Activated CD8-positive, alpha-beta T cell treated with anti-CD3 and anti-CD28 coated beads for 36 hours (primary cell): ENCODE measurements at regions of chrX and their contacts with region 1.

Region 1: GRCh38 chrX:38985375-38985774 is 184.1 kb downstream of the MID1IP1 start:
- DNase-seq: peak; percentile 11
- ATAC-seq: peak; percentile 75
- H3K4me3 Mint-ChIP-seq: no peak overlapping the region
- H3K27ac Mint-ChIP-seq: no peak overlapping the region
- H3K4me1 Mint-ChIP-seq: no peaks in the 10 kb centered on the region
- H3K27me3 Mint-ChIP-seq: no peaks in the 10 kb centered on the region
- CTCF ChIP-seq: peak; percentile 40

Region 2: DNA sequence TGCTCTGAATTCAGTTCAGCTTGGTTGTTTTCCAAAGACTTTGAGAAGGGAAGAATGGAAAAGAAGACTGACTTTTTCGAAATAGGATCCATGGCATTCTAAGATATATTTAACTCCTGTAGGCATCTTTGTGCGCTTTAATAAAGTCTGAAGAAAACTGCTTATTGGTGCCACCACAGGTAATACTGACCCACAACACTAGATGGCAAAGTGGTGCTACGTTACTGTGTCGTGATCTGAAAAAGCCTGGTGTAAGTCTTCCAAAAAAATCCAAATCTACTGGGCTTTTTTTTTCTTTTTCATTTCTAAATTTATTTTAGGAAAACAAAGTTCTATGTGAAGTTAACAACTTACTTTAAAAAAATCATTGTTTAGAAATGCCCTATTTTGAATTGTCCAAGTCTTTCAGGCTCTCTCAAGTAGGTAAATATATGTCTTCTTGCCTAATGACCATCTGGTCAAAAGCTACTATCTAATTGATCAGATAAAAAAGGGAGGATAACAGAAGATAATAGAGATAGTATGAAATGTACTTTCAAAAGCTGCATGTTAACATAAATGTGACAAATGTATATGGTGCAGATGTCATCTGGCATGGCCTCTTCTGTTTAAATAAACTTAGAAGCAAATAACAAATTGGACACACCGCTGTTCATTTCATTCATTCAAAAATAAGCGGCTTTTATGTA is 231.1 kb before region 1 on chrX:
- CTCF ChIA-PET with region 1: interaction called, 7 read pairs
- POLR2A ChIA-PET with region 1: no interaction called
- intact Hi-C with region 1: loop called (anchors 5 kb)
- DNase-seq: peak; percentile 41
- ATAC-seq: no peak
- H3K4me3 Mint-ChIP-seq: no peak overlapping the region
- H3K27ac Mint-ChIP-seq: no peak overlapping the region
- H3K4me1 Mint-ChIP-seq: no peaks in the 10 kb centered on the region
- H3K27me3 Mint-ChIP-seq: peaks cover 2% of the 10 kb centered on the region
- CTCF ChIP-seq: peak; percentile 49

Region 3: GRCh38 chrX:38768079-38768478 is 217.3 kb before region 1 on chrX:
- CTCF ChIA-PET with region 1: interaction called, 13 read pairs
- POLR2A ChIA-PET with region 1: no interaction called
- intact Hi-C with region 1: no loop called
- DNase-seq: no peak
- ATAC-seq: no peak
- H3K4me3 Mint-ChIP-seq: no peak overlapping the region
- H3K27ac Mint-ChIP-seq: no peak overlapping the region
- H3K4me1 Mint-ChIP-seq: no peaks in the 10 kb centered on the region
- H3K27me3 Mint-ChIP-seq: no peaks in the 10 kb centered on the region
- CTCF ChIP-seq: peak; percentile 22

Region 4: GRCh38 chrX:38948046-38948445 is 37.3 kb before region 1 on chrX:
- CTCF ChIA-PET with region 1: no interaction called
- POLR2A ChIA-PET with region 1: no interaction called
- intact Hi-C with region 1: no loop called
- DNase-seq: no peak
- ATAC-seq: no peak
- H3K4me3 Mint-ChIP-seq: no peak overlapping the region
- H3K27ac Mint-ChIP-seq: no peak overlapping the region
- H3K4me1 Mint-ChIP-seq: no peaks in the 10 kb centered on the region
- H3K27me3 Mint-ChIP-seq: no peaks in the 10 kb centered on the region
- CTCF ChIP-seq: no peak